CD8-positive, alpha-beta T cell (primary cell): ENCODE measurements at regions of chr20 and their contacts with region 1.

Region 1: GRCh38 chr20:14093652-14094051 is 98.3 kb downstream of the MACROD2 start:
- DNase-seq: no peak
- ATAC-seq: no peak
- H3K4me3 ChIP-seq: no peak overlapping the region
- H3K4me3 Mint-ChIP-seq: no peak overlapping the region
- H3K27ac ChIP-seq: no peak overlapping the region
- H3K27ac Mint-ChIP-seq: no peak overlapping the region
- H3K4me1 ChIP-seq: no peaks in the 10 kb centered on the region
- H3K4me1 Mint-ChIP-seq: no peaks in the 10 kb centered on the region
- H3K27me3 ChIP-seq: no peaks in the 10 kb centered on the region
- H3K27me3 Mint-ChIP-seq: no peaks in the 10 kb centered on the region
- CTCF ChIP-seq: no peak

Region 2: DNA sequence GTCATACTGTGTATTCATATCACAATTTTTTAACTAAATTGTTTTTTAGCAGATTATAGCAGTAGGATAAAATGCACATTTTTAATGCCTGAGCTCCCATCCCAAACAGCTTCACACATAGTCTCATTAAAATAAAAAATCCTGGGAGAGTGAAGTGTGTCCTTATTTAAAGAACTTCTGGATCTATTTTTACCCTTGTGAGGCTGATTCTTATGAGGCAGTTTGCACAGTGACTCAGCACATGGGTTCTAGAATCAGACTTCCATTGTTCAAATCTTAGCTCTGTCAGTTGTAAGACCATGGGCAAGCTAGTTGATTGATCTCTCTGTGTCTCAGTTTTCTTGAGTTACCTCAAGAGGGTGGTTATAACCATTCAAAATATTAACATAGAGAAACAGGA is 26.0 kb before region 1 on chr20:
- CTCF ChIA-PET with region 1: no interaction called
- POLR2A ChIA-PET with region 1: no interaction called
- intact Hi-C with region 1: loop called in 1 of 2 experiments (anchors 1 kb)
- DNase-seq: no peak
- ATAC-seq: no peak
- H3K4me3 ChIP-seq: no peak overlapping the region
- H3K4me3 Mint-ChIP-seq: no peak overlapping the region
- H3K27ac ChIP-seq: no peak overlapping the region
- H3K27ac Mint-ChIP-seq: no peak overlapping the region
- H3K4me1 ChIP-seq: no peaks in the 10 kb centered on the region
- H3K4me1 Mint-ChIP-seq: no peaks in the 10 kb centered on the region
- H3K27me3 ChIP-seq: no peaks in the 10 kb centered on the region
- H3K27me3 Mint-ChIP-seq: no peaks in the 10 kb centered on the region
- CTCF ChIP-seq: no peak